Right ventricle myocardium inferior (tissue), 1 donor: ENCODE measurements at regions of chr19 and their contacts with region 1.

Region 1: GRCh38 chr19:10690341-10690781 is 10.9 kb upstream of the QTRT1 start:
- DNase-seq: peak; percentile 13
- ATAC-seq: no peak

Region 2: DNA sequence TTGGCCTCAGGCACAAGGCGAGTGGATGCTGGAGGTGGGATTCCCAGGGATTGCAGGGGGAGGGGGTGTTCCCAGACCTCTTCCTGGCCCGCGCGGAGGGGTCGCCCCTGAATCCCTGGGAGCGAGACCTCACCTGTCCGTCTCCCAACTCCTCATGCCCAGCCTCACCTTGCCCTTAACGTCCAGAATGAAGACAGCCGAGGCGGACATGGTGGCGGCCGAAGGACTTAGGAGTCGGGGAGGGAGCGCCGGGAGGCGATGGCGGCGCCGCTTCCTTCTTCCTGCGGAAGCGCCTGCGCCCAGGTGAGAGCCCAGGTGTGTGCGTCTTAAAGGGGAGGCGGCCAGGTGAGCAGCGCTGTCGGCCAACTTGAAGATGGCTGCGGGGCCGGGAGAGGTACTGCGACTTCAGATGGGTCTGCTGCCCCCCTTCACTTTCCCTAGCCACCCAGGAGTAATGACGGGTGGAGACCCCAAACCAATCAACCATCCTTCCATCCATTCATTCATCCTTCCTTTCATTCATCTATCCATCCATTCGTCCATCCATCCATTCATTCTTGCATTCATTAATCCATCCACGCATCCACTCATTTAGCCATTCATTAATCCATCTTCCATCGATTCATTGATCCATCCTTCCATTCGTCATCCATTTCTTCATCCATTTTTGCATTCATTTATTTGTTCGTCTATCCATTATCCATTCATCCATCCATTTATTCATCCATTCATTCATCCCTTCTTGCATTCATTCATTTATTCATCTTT is 103.2 kb before region 1 on chr19 and contains the start of gene AP1M2:
- intact Hi-C with region 1: no loop called
- DNase-seq: no peak
- ATAC-seq: no peak
- total RNA-seq, gene AP1M2: not detected

Region 3: GRCh38 chr19:10653715-10654492 is 36.5 kb before region 1 on chr19 and contains the start of gene ILF3:
- intact Hi-C with region 1: loop called (anchors 5 kb)
- DNase-seq: peak; percentile 100
- ATAC-seq: peak; percentile 94
- total RNA-seq, gene ILF3: 101 TPM